Motor neuron (in vitro differentiated cells): ENCODE measurements at regions of chr2 and their contacts with region 1.

Region 1: DNA sequence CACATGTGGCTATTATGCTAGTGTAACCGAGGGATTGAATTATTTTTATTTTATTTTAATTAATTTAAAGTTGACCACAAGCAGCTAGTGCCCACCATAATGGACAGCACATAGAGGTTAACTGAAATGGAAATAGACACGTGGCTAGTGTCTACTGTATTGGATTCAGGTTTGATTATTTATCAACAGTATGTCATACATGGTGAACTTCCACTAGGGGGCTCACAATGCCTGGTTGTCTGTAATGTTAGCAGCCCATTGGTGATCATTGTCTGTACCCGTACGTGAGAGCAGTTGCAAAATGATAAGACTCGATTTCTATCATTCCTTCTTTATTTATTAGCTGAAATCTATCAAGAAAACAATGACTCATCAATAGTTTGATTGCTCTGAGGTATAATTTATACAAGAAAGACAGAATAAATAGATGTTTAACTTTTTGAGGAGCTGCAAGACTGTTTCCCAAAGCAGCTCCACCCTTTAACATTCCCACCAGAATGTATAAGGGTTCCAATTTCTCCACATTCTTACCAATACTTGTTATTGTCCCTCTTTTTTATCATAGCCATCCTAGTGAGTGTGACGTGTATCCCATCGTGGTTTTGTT is 76.5 kb downstream of the CYBRD1 start:
- ATAC-seq: peak; percentile 78 to 99 (median 86)
- H3K4me3 ChIP-seq: no peak overlapping the region
- H3K27ac ChIP-seq: no peak overlapping the region
- H3K4me1 ChIP-seq: peaks cover 0 to 2% of the 10 kb centered on the region in 2 donors

Region 2: GRCh38 chr2:171687287-171688128 is 88.7 kb after region 1 on chr2 and contains the start of gene DYNC1I2:
- in situ Hi-C with region 1: loop called in 1 of 9 experiments (anchors 25 kb)
- ATAC-seq: peak; percentile 86 to 96 (median 92)
- H3K4me3 ChIP-seq: peak within 1 kb of the TSS; percentile 49 to 90 (median 66)
- H3K27ac ChIP-seq: peak within 1 kb of the TSS; percentile 77 to 78
- H3K4me1 ChIP-seq: peaks cover 0 to 11% of the 10 kb centered on the region in 2 donors
- total RNA-seq, gene DYNC1I2: 103 to 164 (median 145) TPM

Region 3: GRCh38 chr2:171703574-171704347 is 104.9 kb after region 1 on chr2:
- in situ Hi-C with region 1: loop called in 2 of 9 experiments (anchors 25 kb)
- ATAC-seq: peak in 3 of 8 experiments; percentile 47 to 57 (median 54)
- H3K4me3 ChIP-seq: no peak overlapping the region
- H3K27ac ChIP-seq: no peak overlapping the region
- H3K4me1 ChIP-seq: no peaks in the 10 kb centered on the region

Region 4: DNA sequence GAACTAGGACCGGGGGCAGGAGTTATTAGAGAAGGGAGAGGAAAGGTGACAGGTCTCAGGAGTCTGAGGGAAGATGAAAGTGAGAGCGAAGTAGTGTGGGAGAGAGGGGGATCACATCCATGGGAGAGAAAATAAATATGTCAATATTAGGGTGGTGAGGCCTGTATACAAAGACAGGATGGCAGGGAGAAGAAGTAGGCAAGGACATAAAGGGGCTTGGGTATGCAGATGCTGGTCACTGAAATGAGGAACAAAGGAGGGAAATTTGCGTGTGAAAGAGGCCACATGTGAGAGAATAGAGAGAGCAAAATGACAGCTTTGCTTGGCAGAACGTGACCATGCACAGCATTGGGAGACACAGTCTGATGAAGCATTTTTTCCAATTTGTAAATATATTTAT is 414.6 kb after region 1 on chr2:
- in situ Hi-C with region 1: no loop called
- ATAC-seq: peak in 5 of 8 experiments; percentile 49 to 91 (median 75)
- H3K4me3 ChIP-seq: no peak overlapping the region
- H3K27ac ChIP-seq: peak overlapping the region; percentile 12 to 56
- H3K4me1 ChIP-seq: peaks cover 10 to 19% of the 10 kb centered on the region in 2 donors

Region 5: GRCh38 chr2:172909454-172909853 is 1310.6 kb after region 1 on chr2:
- in situ Hi-C with region 1: no loop called
- ATAC-seq: no peak
- H3K4me3 ChIP-seq: no peak overlapping the region
- H3K27ac ChIP-seq: no peak overlapping the region
- H3K4me1 ChIP-seq: peaks cover 7 to 19% of the 10 kb centered on the region in 2 donors